Activated B cell treated with CpG ODN at 0.5 μM for 24 hours (primary cell): ENCODE measurements at regions of chr10 and their contacts with region 1.

Region 1: GRCh38 chr10:96850825-96851224 is 18.7 kb downstream of the LCOR start:
- DNase-seq: no peak
- ATAC-seq: no peak
- H3K4me3 Mint-ChIP-seq: no peak overlapping the region
- H3K27ac Mint-ChIP-seq: no peak overlapping the region
- H3K4me1 Mint-ChIP-seq: peaks cover 48% of the 10 kb centered on the region
- H3K27me3 Mint-ChIP-seq: no peaks in the 10 kb centered on the region
- CTCF ChIP-seq: no peak

Region 2: DNA sequence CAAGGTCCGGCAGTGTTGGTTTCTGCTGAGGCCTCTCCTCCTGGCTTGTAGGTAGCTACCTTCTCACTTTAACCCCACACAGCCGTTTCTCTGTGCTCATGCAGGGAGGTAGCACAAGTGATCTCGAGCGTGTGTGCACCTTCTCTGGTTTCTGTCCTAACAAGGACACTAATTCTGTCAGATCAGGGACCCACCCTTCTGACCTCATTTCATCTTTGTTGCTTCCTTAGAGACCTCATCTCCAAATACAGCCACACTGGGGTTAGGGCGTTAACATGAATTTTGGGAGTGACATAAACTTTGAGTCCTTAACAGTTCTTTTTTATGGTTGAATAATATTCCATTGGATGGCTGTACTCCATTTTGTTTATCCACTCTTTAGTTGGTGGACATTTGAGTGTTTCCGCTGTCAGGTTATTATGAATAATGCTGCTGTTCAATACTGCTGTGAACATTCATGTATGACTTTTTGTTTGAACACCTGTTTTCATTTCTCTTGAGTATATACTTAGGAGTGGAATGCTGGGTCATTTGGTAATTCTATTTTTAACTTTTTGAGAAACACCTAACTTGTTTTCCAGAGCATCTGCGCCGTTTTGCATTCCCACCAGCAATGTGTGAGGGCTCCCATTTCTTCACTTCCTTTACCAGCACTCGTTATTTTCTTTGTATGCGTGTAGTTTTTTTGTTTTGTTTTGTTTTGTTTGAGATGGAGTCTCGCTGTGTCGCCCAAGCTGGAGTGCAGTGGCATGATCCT is 38.8 kb after region 1 on chr10:
- CTCF ChIA-PET with region 1: no interaction called
- POLR2A ChIA-PET with region 1: no interaction called
- intact Hi-C with region 1: loop called (anchors 5 kb)
- DNase-seq: no peak
- ATAC-seq: no peak
- H3K4me3 Mint-ChIP-seq: no peak overlapping the region
- H3K27ac Mint-ChIP-seq: peak overlapping the region; percentile 41
- H3K4me1 Mint-ChIP-seq: peaks cover 36% of the 10 kb centered on the region
- H3K27me3 Mint-ChIP-seq: no peaks in the 10 kb centered on the region
- CTCF ChIP-seq: no peak